ENCODE measurements at regions of chr13 and their contacts with region 1.

Region 1: DNA sequence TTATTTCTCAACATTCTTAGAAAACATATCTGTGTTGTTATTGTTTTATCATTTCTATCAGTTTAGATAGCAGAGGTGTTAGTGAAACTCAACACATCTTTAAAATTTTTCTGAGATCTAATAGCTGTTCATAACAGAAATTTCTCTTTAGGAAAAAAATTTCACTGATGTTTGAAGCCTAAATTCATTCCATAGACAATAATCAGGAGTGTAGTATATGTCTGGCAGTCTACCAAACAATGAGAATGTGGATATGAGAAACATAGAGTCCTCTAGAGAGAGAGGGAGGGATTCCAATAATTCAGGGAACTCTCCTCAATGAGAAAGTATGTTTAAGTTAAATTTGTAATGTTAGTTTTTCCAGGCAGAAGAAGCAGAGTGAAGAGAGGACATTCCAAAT is 118.2 kb upstream of the EDNRB start:
- DNase-seq: no peak

Region 2: DNA sequence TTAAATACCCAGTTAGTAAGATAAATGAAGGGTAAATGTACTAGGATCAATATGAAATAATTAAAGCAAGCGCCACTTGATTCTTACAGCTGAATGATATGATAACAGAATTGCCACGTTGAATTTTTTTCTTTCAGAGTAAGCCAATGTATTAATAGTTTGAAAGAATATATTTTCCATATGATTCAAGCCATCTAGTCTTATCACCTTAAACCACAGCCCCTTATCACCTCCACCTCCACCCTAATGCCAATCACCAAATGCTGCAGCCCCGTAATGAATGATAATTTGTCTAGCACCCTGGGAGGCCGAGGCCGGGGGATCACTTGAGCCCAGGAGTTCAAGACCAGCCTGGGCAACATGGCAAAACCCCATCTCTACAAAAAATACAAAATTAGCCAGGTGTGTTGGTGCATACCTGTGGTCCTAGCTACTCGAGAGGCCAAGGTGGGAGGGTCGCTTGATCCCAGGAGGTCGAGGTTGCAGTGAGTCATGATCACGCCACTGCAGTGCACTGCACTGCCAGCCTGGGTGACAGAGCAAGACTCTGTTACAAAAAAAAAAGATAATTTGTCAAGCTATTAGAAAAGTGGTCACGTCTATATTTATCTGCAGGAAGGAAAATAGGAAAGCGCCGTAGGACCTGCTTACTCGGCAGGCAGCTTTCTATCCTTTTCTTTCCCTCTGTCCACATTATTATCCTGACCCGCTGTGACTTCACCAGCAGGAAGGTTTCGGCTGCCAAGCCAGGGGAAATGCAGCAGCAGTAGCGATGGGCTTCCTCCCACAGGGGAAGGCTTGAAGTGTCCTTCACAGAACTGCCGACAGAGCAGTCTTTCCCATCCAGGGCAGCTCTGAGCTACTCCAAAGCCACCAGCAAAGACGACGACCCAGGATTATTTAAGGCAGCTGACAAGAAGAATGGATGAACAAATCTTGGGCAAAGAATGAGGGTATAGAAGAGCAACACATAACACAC is 1064.7 kb before region 1 on chr13:
- intact Hi-C with region 1: loop called in 1 of 2 experiments (anchors 5 kb)
- DNase-seq: no peak

Region 3: DNA sequence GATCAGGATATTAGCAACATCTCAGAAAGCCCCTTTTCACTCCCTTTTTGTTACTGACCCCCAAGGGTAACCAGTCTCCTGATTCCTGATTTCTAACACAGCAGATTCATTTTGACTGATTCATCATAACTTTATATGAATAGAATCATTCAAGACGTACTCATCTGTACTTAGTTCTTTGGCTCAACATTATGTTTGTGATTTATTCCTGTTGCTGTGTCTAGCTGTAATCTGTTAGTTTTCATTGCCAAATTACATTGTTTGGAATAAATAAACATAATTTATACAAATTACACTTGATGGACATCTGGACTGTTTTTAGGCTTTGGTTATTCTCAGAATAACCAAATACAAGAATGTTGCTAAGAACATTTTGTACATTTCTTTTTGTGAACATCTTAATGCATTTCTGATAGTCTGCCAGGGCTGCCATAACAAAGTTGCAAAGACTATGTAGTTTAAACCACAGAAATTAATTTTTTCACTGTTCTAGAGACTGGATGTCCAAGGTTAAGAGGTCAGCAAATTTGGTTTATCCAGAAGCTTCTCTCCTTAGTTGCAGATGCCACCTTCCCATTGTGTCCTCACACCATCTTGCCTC is 55.5 kb before region 1 on chr13:
- intact Hi-C with region 1: no loop called
- DNase-seq: no peak

Region 4: DNA sequence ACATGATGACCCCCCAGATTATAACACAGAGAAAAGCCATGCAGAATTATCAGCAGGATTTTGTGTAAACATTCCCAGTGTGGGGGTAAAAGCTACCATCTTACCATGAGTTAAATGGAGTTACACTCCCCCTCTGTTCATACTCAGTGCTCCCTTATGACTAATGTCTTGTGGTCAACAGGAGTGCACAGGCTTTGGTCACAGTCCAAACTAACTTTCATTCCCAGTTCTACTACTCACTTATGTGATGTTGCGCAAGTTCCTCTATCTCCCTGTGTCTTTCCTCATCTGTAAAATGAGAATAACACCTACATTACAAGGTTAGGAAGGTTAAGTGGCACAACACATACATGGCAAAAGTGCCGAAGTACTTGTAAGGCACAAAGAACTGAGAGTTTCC is 1091.3 kb after region 1 on chr13:
- intact Hi-C with region 1: loop called in 1 of 2 experiments (anchors 5 kb)
- DNase-seq: no peak

Region 5: GRCh38 chr13:79791471-79792042 is 1754.7 kb after region 1 on chr13:
- intact Hi-C with region 1: no loop called
- DNase-seq: peak; percentile 62